ENCODE measurements at regions of chr10 and their contacts with region 1.

Region 1: DNA sequence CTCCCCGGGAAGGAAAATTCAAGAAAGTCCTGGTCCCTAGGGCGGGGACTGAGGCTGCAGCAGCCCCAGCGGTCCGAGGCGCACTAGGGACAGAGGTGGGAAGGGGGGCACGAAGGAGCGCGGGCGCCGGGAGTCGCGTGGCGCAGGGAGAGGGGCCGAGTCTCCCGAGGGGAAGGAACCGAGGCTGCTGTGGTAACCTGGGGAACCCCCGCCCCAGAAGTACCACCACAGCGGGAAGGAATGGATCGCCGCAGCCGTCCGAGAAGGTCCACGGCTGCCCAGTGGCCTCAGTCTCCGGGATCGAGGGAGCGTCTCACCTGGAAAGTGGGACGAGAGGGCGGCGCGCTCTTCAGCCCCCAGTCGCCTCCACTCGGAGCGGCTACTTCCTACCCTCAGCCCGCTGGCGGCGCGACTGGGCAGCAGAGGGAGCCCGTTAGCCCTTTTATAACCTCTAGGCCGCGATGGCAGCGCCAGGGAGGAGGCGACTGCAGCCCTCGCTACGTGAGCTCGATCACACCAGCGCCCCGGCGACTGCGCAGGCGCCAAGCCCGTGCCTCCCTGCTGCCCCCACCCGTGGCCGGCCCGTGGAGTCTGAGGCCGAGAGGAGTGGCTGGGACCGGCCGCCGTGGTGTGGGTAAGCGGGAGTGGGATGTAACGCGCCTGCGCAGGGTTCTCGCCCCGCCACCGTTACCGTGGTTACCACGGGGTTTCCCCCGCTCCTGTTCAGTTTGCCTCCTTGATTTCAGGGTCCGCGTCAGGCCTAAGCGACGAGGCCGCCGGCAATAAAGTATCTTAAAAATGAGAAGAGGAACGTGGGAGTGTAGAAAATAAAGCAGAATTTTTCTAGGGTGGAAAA is at the start of gene P4HA1:
- DNase-seq: peak; percentile 90 to 98 (median 94)
- ATAC-seq: peak; percentile 81 to 92 (median 90)
- H3K4me3 ChIP-seq: peak within 1 kb of the TSS; percentile 86 to 96
- H3K4me3 Mint-ChIP-seq: peak within 1 kb of the TSS; percentile 90 to 95 (median 95)
- H3K27ac ChIP-seq: peak within 1 kb of the TSS; percentile 97
- H3K27ac Mint-ChIP-seq: peak within 1 kb of the TSS; percentile 88 to 93
- H3K4me1 ChIP-seq: peaks cover 2 to 24% of the 10 kb centered on the region in 2 experiments
- H3K4me1 Mint-ChIP-seq: peaks cover 27 to 40% (median 31%) of the 10 kb centered on the region in 3 donors
- H3K27me3 ChIP-seq: no peaks in the 10 kb centered on the region
- H3K27me3 Mint-ChIP-seq: no peaks in the 10 kb centered on the region
- total RNA-seq, gene P4HA1: 11.3 to 15.4 (median 13.0) TPM

Region 2: GRCh38 chr10:71945819-71946474 is 1150.7 kb before region 1 on chr10:
- CTCF ChIA-PET with region 1: no interaction called
- POLR2A ChIA-PET with region 1: interaction called in 1 of 2 experiments, 14 read pairs
- DNase-seq: peak in 1 of 35 experiments; percentile 35
- ATAC-seq: no peak
- H3K4me3 ChIP-seq: no peak overlapping the region
- H3K4me3 Mint-ChIP-seq: no peak overlapping the region
- H3K27ac ChIP-seq: no peak overlapping the region
- H3K27ac Mint-ChIP-seq: no peak overlapping the region
- H3K4me1 ChIP-seq: no peaks in the 10 kb centered on the region
- H3K4me1 Mint-ChIP-seq: peaks cover 0 to 2% (median 0%) of the 10 kb centered on the region in 3 donors
- H3K27me3 ChIP-seq: peaks cover 0 to 17% of the 10 kb centered on the region in 2 experiments
- H3K27me3 Mint-ChIP-seq: no peaks in the 10 kb centered on the region

Region 3: GRCh38 chr10:72079356-72079755 is 1017.3 kb before region 1 on chr10:
- CTCF ChIA-PET with region 1: no interaction called
- POLR2A ChIA-PET with region 1: no interaction called
- DNase-seq: peak in 34 of 35 experiments; percentile 59 to 93 (median 82)
- ATAC-seq: peak; percentile 62 to 68 (median 64)
- H3K4me3 ChIP-seq: peak overlapping the region; percentile 34 to 52
- H3K4me3 Mint-ChIP-seq: peak overlapping the region; percentile 75 to 96 (median 76)
- H3K27ac ChIP-seq: peak overlapping the region; percentile 80
- H3K27ac Mint-ChIP-seq: peak overlapping the region; percentile 93 to 94
- H3K4me1 ChIP-seq: peaks cover 63 to 100% of the 10 kb centered on the region in 2 experiments
- H3K4me1 Mint-ChIP-seq: peaks cover 95 to 99% (median 96%) of the 10 kb centered on the region in 3 donors
- H3K27me3 ChIP-seq: no peaks in the 10 kb centered on the region
- H3K27me3 Mint-ChIP-seq: no peaks in the 10 kb centered on the region

Region 4: DNA sequence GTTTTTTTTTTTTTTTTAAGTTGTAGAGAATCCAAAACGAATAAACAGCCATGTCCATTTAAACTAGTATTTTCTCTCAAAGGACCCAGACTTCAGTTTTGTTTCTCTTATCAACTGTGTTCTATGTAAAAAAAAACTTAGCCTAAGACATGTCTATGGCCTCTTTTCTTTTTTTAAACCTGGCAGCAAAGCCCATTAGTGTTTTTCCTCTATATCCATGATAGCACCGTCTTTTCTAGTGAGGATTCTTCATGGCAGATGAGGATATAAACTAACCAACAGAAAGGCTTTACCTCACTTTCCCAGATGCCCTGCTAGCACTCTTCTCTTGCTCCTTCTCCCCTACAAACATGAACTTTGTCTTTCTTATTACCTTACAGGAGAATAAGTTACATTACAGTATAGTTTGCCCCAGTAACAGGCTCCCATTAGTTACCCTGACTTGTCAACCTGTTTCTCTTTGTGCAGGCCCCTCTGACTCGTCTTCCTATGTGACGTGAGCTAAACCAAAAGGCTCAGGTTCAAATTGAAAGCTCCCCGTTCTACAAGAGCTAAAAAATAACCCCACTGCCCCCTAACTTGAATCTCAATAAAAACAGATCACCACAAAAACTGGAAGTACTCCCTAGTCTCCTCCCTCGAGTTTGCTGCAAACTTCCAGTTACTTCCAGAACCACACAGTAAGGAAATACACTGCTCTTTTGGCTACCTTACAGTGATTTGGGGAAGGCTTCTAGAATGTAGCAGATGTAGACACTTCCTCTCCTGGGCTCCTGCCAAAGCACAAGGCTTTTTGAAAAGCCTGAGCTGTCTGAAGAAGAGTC is 20.1 kb before region 1 on chr10:
- CTCF ChIA-PET with region 1: interaction called, 3 to 5 read pairs
- POLR2A ChIA-PET with region 1: interaction called in 1 of 2 experiments, 13 read pairs
- DNase-seq: no peak
- ATAC-seq: no peak
- H3K4me3 ChIP-seq: no peak overlapping the region
- H3K4me3 Mint-ChIP-seq: no peak overlapping the region
- H3K27ac ChIP-seq: no peak overlapping the region
- H3K27ac Mint-ChIP-seq: peak overlapping the region; percentile 60 to 68
- H3K4me1 ChIP-seq: no peaks in the 10 kb centered on the region
- H3K4me1 Mint-ChIP-seq: peaks cover 6 to 9% (median 8%) of the 10 kb centered on the region in 3 donors
- H3K27me3 ChIP-seq: no peaks in the 10 kb centered on the region
- H3K27me3 Mint-ChIP-seq: no peaks in the 10 kb centered on the region

Region 5: DNA sequence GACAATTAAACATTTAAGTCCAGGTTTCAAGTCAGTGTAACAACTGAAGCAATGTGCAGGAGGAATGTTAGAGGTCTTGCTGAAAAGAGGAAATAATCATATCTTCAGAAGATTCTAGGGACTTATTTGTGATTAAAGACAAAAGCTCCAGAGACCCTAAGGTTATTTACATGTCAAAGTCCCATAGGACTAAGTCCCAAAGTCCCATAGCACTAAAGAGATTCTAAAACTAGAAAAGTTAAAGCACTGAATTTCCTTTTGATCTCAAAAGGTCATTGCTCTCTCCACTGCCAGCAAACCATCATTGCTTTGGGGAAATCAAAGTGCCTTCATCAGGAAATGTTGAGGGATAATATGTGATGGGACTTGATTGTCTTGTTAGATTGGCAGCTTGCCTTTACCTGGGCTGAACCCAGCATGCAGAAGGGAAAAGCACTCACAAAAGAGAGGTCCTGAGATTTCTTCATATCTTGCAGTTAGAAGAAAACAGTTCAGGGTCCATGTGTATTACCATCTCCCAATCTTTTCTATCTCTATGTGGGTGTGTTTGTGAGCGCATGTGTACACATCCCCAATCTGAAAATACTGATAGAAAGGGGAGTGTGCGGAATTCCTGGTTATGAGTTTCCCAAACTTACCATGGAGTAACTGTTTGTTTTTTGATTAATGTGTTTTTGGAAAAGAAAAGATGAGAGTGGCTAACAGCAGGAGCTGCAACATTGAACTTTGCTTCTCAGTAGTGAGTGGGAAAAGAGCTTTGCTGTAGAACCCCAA is 35.4 kb after region 1 on chr10:
- CTCF ChIA-PET with region 1: interaction called in 1 of 2 experiments, 8 read pairs
- POLR2A ChIA-PET with region 1: interaction called in 1 of 2 experiments, 29 read pairs
- DNase-seq: no peak
- ATAC-seq: no peak
- H3K4me3 ChIP-seq: no peak overlapping the region
- H3K4me3 Mint-ChIP-seq: no peak overlapping the region
- H3K27ac ChIP-seq: no peak overlapping the region
- H3K27ac Mint-ChIP-seq: no peak overlapping the region
- H3K4me1 ChIP-seq: no peaks in the 10 kb centered on the region
- H3K4me1 Mint-ChIP-seq: no peaks in the 10 kb centered on the region
- H3K27me3 ChIP-seq: no peaks in the 10 kb centered on the region
- H3K27me3 Mint-ChIP-seq: no peaks in the 10 kb centered on the region

Region 6: DNA sequence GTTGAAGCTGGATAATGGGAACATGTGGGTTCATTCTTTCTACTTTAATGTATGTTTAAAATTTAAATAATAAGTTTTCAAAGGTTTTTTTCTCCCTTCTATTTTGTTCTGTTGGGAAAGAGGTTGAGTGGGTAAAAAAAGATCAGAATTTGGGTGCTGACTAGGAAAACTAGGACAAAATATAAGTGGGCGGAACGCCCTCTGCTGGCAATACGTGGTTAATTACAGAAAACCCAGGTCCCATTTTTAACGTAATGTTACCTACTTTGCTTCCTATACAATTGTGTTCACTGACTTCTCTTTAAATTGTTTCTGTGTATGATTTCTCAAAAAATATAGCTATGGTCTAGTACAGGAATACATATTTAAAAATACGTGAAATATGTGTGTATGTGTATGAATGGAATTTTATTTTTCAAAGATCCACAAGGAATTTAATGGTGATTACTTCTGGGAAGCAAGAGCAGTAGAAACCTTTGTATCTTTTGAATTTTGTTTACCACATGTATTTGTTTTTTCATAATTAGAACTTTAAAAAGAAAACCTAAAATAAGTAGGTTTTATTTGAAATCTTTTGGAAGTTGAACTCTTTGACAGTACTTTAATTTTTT is 62.5 kb after region 1 on chr10:
- CTCF ChIA-PET with region 1: interaction called, 5 to 48 read pairs
- POLR2A ChIA-PET with region 1: interaction called, 3 to 4 read pairs
- DNase-seq: peak in 34 of 35 experiments; percentile 6 to 77 (median 44)
- ATAC-seq: peak in 3 of 4 experiments; percentile 16 to 70 (median 58)
- H3K4me3 ChIP-seq: no peak overlapping the region
- H3K4me3 Mint-ChIP-seq: no peak overlapping the region
- H3K27ac ChIP-seq: no peak overlapping the region
- H3K27ac Mint-ChIP-seq: no peak overlapping the region
- H3K4me1 ChIP-seq: peaks cover 6 to 7% of the 10 kb centered on the region in 2 experiments
- H3K4me1 Mint-ChIP-seq: peaks cover 37 to 38% (median 37%) of the 10 kb centered on the region in 3 donors
- H3K27me3 ChIP-seq: no peaks in the 10 kb centered on the region
- H3K27me3 Mint-ChIP-seq: no peaks in the 10 kb centered on the region